CD8-positive, alpha-beta T cell (primary cell): ENCODE measurements at regions of chr3 and their contacts with region 1.

Region 1: DNA sequence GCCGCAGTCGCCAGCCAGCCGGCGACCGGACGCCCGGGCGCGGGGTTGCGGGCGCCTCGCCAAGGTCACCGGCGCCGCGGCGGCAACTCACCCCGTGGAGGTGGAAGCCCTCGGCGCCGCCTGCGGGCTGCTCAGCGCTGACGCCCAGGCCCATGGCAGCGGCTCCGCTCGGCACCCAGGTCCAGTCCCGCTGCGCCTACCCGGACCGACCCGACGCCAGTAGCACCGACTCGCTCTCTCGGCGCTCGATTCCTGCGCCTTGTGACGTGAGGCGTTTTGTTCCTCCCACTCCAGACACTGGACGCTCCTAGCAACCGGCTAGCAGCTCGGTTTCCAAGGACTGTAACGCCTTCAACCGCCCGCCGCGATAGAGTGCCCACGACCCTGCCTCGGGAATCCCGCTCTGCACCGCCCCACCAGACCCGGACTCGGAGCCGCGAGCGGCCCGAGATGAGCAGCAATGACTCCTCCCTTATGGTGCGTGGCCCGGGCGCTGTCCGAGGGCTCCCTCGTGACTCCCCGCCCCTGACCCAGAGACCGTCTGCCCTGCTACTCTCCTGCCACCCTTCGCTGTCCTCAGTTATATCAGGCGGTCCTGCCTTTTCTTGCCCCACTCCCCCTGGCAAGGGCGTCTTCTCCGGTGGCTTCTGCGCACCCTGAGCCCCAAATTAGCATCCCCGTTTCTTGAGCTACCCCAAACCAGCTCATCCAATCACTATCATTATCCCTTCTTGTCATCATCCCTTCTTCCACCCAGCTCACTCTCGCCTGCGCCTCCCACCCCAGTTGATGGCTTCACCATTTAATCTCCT is at the starts of genes GORASP1 and TTC21A:
- DNase-seq: peak; percentile 16 to 83 (median 62)
- ATAC-seq: peak; percentile 61
- H3K4me3 ChIP-seq: peak within 1 kb of the TSS; percentile 75 to 95
- H3K4me3 Mint-ChIP-seq: peak within 1 kb of the TSS; percentile 90
- H3K27ac ChIP-seq: peak within 1 kb of the TSS in 1 of 2 experiments; percentile 69
- H3K27ac Mint-ChIP-seq: peak within 1 kb of the TSS; percentile 87
- H3K4me1 ChIP-seq: peaks cover 29% of the 10 kb centered on the region
- H3K4me1 Mint-ChIP-seq: peaks cover 49% of the 10 kb centered on the region
- H3K27me3 ChIP-seq: no peaks in the 10 kb centered on the region
- H3K27me3 Mint-ChIP-seq: no peaks in the 10 kb centered on the region
- CTCF ChIP-seq: no peak
- total RNA-seq, gene GORASP1: 13.9 to 20.2 TPM
- total RNA-seq, gene TTC21A: 1.8 to 2.3 TPM

Region 2: GRCh38 chr3:37824954-37825328 is 1282.7 kb before region 1 on chr3:
- CTCF ChIA-PET with region 1: no interaction called
- POLR2A ChIA-PET with region 1: no interaction called
- intact Hi-C with region 1: no loop called
- DNase-seq: no peak
- ATAC-seq: no peak
- H3K4me3 ChIP-seq: no peak overlapping the region
- H3K4me3 Mint-ChIP-seq: no peak overlapping the region
- H3K27ac ChIP-seq: no peak overlapping the region
- H3K27ac Mint-ChIP-seq: no peak overlapping the region
- H3K4me1 ChIP-seq: no peaks in the 10 kb centered on the region
- H3K4me1 Mint-ChIP-seq: no peaks in the 10 kb centered on the region
- H3K27me3 ChIP-seq: no peaks in the 10 kb centered on the region
- H3K27me3 Mint-ChIP-seq: peaks cover 8% of the 10 kb centered on the region
- CTCF ChIP-seq: no peak

Region 3: GRCh38 chr3:38548159-38548931 is 559.2 kb before region 1 on chr3:
- CTCF ChIA-PET with region 1: no interaction called
- POLR2A ChIA-PET with region 1: no interaction called
- intact Hi-C with region 1: no loop called
- DNase-seq: peak in 1 of 9 experiments; percentile 38
- ATAC-seq: no peak
- H3K4me3 ChIP-seq: no peak overlapping the region
- H3K4me3 Mint-ChIP-seq: no peak overlapping the region
- H3K27ac ChIP-seq: no peak overlapping the region
- H3K27ac Mint-ChIP-seq: no peak overlapping the region
- H3K4me1 ChIP-seq: no peaks in the 10 kb centered on the region
- H3K4me1 Mint-ChIP-seq: no peaks in the 10 kb centered on the region
- H3K27me3 ChIP-seq: no peaks in the 10 kb centered on the region
- H3K27me3 Mint-ChIP-seq: no peaks in the 10 kb centered on the region
- CTCF ChIP-seq: no peak

Region 4: DNA sequence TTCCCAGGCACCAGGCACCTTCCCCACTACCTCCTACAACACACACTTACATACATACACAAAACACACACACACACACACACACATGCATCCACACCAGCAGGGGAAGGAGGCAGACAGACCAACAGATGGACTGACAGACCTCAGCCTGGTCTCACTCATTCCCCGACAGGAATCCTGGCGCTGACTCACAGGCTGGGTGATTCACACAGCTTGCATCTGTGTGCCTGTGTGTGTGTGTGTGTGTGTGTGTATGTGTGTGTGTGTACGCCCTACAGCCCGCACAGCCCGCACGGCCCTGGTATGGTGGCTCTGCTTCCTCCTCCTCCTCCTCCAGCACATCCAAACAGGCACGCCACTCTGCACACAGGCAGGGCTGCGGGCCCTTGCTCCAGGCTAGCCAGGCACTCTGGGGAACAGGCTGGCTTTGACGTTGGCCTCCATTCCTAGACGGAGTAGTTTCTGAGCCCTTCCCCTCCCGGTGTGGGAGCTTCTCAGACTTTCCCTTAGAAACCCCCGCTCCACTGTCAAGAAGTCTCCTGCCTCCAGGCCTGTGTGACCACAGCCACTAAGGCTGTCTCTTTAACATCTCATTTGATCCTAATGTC is 39.5 kb after region 1 on chr3:
- CTCF ChIA-PET with region 1: interaction called, 3 read pairs
- POLR2A ChIA-PET with region 1: no interaction called
- intact Hi-C with region 1: loop called in 1 of 2 experiments (anchors 2 kb)
- DNase-seq: peak in 8 of 9 experiments; percentile 58 to 73 (median 68)
- ATAC-seq: peak; percentile 24
- H3K4me3 ChIP-seq: peak overlapping the region; percentile 29 to 55
- H3K4me3 Mint-ChIP-seq: peak overlapping the region; percentile 95
- H3K27ac ChIP-seq: peak overlapping the region; percentile 63 to 76
- H3K27ac Mint-ChIP-seq: peak overlapping the region; percentile 98
- H3K4me1 ChIP-seq: peaks cover 57% of the 10 kb centered on the region
- H3K4me1 Mint-ChIP-seq: peaks cover 67% of the 10 kb centered on the region
- H3K27me3 ChIP-seq: no peaks in the 10 kb centered on the region
- H3K27me3 Mint-ChIP-seq: no peaks in the 10 kb centered on the region
- CTCF ChIP-seq: no peak

Region 5: DNA sequence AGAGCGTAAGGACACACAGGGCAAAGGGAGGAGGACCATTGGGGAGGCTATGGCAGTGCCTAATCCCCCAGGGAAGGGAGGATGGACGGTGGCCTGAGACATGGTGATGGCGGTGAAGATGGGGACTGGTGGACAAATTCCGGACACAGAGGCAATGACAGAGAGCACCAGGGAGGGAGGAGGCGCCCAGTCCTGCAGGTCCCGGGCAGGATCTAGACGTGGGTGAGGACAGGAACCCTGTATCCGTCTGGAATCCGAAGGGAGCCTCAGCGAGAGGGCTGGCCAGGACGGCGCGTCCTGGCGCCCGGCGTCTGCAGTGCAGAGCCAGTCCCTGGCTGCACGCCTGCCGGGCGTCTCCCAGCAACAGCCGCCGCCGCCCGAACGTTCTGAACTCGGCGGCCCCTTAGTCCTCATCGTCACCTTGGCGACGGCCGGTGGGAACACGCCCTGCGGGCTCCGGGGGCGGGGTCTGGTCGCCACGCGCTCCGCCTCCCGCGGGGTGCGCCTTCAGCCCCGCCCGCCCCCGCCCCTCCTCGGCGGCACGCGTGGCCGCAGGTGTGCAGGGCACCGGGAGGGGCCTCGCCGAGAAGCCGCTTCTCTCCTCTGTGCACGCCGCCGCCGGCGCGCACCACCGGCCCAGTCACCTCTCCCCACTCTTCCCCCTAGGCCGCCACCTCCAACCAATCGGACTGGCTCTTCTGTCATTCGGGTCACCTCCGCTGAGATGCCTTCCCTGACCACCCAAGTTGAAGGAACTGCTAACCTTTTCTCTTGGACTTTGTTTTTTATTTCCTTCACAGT is 73.2 kb after region 1 on chr3:
- CTCF ChIA-PET with region 1: interaction called, 3 read pairs
- POLR2A ChIA-PET with region 1: no interaction called
- intact Hi-C with region 1: loop called (anchors 1 to 2 kb)
- DNase-seq: peak; percentile 79 to 96 (median 88)
- ATAC-seq: peak; percentile 89
- H3K4me3 ChIP-seq: peak overlapping the region; percentile 39 to 44
- H3K4me3 Mint-ChIP-seq: peak overlapping the region; percentile 76
- H3K27ac ChIP-seq: peak overlapping the region; percentile 39 to 62
- H3K27ac Mint-ChIP-seq: peak overlapping the region; percentile 85
- H3K4me1 ChIP-seq: peaks cover 27% of the 10 kb centered on the region
- H3K4me1 Mint-ChIP-seq: peaks cover 37% of the 10 kb centered on the region
- H3K27me3 ChIP-seq: no peaks in the 10 kb centered on the region
- H3K27me3 Mint-ChIP-seq: no peaks in the 10 kb centered on the region
- CTCF ChIP-seq: no peak

Region 6: DNA sequence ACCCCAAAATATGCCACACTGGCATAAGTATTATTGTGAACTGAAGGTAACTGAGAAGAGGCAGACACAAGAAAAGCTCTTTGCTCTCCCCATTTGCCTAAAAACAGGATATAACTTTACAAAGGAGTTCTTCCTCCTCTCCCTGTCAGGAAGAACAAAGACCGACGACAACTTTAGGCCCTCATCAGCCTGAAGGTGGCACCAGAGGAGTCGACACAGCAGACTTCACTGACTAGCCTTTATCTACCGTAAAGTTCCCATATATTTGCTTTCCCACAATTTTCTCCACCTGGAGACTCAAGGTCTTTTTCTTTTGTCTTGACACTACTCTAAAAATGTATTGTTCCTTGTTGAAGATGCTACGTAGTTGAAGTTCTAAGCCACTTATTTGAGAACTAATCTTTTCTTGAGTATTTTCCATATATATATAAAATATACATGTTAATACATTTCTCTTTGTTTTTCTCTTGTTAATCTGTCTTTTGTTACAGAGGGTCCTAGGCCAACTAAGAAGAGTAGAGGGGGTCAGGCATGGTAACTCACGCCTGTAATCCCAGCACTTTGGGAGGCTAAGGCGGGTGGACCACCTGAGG is 101.0 kb after region 1 on chr3:
- CTCF ChIA-PET with region 1: no interaction called
- POLR2A ChIA-PET with region 1: no interaction called
- intact Hi-C with region 1: no loop called
- DNase-seq: peak in 5 of 9 experiments; percentile 20 to 78 (median 41)
- ATAC-seq: no peak
- H3K4me3 ChIP-seq: no peak overlapping the region
- H3K4me3 Mint-ChIP-seq: no peak overlapping the region
- H3K27ac ChIP-seq: peak overlapping the region in 1 of 2 experiments; percentile 14
- H3K27ac Mint-ChIP-seq: no peak overlapping the region
- H3K4me1 ChIP-seq: peaks cover 7% of the 10 kb centered on the region
- H3K4me1 Mint-ChIP-seq: peaks cover 6% of the 10 kb centered on the region
- H3K27me3 ChIP-seq: no peaks in the 10 kb centered on the region
- H3K27me3 Mint-ChIP-seq: peaks cover 2% of the 10 kb centered on the region
- CTCF ChIP-seq: peak; percentile 44